ENCODE measurements at regions of chr14 and their contacts with region 1.

Region 1: DNA sequence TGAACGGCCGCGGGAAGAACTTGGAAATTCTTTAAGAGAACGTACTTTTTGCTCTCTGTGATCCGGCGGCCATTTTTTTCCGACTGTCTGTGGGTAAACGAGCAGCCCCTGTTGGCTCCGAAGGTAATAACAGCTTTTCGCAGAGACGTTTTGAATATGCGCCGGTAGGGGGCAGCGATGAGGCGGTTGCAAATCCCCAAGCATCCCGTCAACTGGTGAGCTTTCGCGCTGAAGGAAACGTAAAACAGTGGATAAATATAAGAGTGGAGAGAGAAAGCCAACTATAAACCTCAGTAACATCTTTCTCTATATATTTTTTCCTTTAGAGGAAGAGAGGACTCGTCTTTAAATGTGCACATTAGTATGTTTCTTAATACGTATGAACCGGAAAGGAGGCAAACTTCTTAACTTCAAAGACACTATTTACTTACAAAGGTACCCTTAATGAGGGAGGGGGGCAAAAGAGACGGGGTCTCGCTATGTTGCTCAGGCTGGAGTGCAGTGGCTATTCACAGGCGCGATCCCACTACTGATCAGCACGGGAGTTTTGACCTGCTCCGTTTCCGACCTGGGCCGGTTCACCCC is 9.6 kb upstream of the NEMF start:
- DNase-seq: peak; percentile 70 to 93 (median 82)
- ATAC-seq: peak; percentile 28 to 47 (median 33)
- H3K4me3 ChIP-seq: peak overlapping the region; percentile 73 to 93
- H3K4me3 Mint-ChIP-seq: no peak overlapping the region
- H3K27ac ChIP-seq: peak overlapping the region; percentile 97
- H3K27ac Mint-ChIP-seq: no peak overlapping the region
- H3K4me1 ChIP-seq: peaks cover 19 to 37% of the 10 kb centered on the region in 2 experiments
- H3K4me1 Mint-ChIP-seq: peaks cover 0 to 25% (median 14%) of the 10 kb centered on the region in 3 donors
- H3K27me3 ChIP-seq: no peaks in the 10 kb centered on the region
- H3K27me3 Mint-ChIP-seq: peaks cover 0 to 7% of the 10 kb centered on the region in 2 donors

Region 2: DNA sequence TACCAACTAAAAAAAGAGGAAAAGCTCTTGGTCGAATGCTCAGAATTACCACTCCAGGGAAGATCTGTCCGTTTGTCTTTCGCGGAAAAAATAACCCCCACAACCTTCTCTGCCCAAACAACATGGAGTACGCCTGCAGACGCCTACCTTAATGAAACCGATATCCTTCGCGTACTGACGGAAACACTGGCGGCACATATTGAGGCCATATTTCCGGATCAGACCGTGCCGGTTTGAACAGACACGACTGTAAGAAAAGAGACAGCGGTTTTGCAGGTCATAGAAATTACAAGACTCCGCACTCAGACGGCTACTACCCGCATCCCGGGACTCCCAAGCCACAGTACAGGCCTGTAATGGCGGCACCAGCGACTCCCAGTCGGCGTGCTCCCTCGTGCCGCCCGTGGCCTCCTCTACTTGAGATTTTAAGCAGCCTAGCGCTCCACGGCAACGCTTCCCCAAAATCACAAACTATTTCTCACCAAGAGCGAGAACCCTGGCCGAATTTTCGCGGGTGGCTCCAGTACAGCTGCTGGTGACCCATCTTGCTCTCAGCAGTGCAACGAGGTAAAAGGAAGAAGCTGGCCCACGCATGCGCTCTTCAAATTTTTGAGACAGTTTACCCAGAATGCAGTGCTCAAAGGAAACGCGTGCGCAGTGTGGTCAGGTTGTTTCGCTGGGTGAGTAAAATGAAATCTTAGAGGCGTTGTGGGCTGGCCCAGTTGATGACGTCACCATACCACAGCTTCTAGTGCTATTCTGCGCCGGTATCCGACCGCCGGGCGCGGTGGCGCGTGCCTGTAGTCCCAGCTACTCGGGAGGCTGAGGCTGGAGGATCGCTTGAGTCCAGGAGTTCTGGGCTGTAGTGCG is 276.1 kb before region 1 on chr14 and contains the start of gene RPS29:
- CTCF ChIA-PET with region 1: interaction called in 1 of 2 experiments, 13 read pairs
- POLR2A ChIA-PET with region 1: interaction called in 1 of 2 experiments, 6 read pairs
- DNase-seq: peak; percentile 94 to 100 (median 97)
- ATAC-seq: peak; percentile 85 to 89 (median 88)
- H3K4me3 ChIP-seq: peak within 1 kb of the TSS; percentile 77 to 99
- H3K4me3 Mint-ChIP-seq: peak within 1 kb of the TSS; percentile 89 to 98 (median 98)
- H3K27ac ChIP-seq: peak within 1 kb of the TSS; percentile 93
- H3K27ac Mint-ChIP-seq: peak within 1 kb of the TSS; percentile 97 to 99
- H3K4me1 ChIP-seq: peaks cover 6 to 31% of the 10 kb centered on the region in 2 experiments
- H3K4me1 Mint-ChIP-seq: peaks cover 50 to 54% (median 52%) of the 10 kb centered on the region in 3 donors
- H3K27me3 ChIP-seq: no peaks in the 10 kb centered on the region
- H3K27me3 Mint-ChIP-seq: peaks cover 2 to 3% of the 10 kb centered on the region in 2 donors
- total RNA-seq, gene RPS29: 3,720 to 4,554 (median 3,981) TPM

Region 3: GRCh38 chr14:49892636-49893308 is 30.6 kb after region 1 on chr14 and contains the start of gene ARF6:
- CTCF ChIA-PET with region 1: interaction called, 10 to 23 read pairs
- POLR2A ChIA-PET with region 1: interaction called in 1 of 2 experiments, 4 read pairs
- DNase-seq: peak; percentile 81 to 96 (median 90)
- ATAC-seq: peak; percentile 84 to 89 (median 88)
- H3K4me3 ChIP-seq: peak within 1 kb of the TSS; percentile 98 to 99
- H3K4me3 Mint-ChIP-seq: peak within 1 kb of the TSS; percentile 93 to 98 (median 97)
- H3K27ac ChIP-seq: peak within 1 kb of the TSS; percentile 98
- H3K27ac Mint-ChIP-seq: peak within 1 kb of the TSS; percentile 99
- H3K4me1 ChIP-seq: peaks cover 15 to 25% of the 10 kb centered on the region in 2 experiments
- H3K4me1 Mint-ChIP-seq: peaks cover 29 to 52% (median 32%) of the 10 kb centered on the region in 3 donors
- H3K27me3 ChIP-seq: no peaks in the 10 kb centered on the region
- H3K27me3 Mint-ChIP-seq: no peaks in the 10 kb centered on the region
- total RNA-seq, gene ARF6: 72.0 to 111 (median 93.6) TPM

Region 4: DNA sequence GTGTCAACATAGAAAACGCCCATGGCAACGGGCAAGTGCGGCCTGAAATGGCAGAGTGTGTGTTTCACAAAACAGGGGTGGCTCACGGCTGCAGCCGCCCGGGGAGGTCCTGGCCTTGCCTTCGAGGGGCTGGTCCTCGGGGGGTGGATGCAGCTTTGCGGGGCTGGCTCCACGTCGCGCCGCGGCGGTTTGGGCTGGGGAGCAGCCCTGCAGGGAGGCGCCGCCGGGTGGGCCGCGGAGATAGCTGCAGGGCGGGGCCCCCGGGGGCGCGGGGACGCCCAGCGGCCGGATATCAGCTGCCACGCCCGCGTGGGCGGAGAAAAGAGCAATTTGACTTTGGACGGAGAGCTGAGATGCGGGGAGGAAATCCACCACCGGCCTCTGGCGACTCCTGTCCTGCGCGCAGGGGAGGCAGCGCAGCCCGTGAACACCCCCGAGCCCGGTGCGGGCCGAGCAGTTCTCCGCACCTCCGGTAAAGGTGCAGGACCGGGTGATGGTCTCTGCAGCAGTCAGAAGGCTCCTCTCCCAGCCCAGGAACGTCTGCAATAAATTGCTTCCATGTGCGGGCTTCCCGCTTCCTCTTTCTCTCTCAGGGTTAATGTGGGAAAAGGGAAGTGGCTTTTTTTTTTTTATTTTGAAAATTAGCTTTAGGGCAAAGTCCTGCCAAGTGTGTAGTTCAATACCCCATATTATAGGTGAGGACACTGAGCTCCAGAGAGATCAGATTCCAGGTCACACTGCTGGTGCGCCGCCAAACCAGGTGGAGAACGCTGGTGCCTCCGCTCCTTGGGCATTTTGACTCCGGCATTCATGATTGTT is 141.2 kb after region 1 on chr14:
- CTCF ChIA-PET with region 1: interaction called, 6 to 28 read pairs
- POLR2A ChIA-PET with region 1: interaction called, 4 to 10 read pairs
- DNase-seq: peak; percentile 59 to 86 (median 72)
- ATAC-seq: peak; percentile 40 to 47 (median 44)
- H3K4me3 ChIP-seq: peak overlapping the region; percentile 60 to 83
- H3K4me3 Mint-ChIP-seq: peak overlapping the region; percentile 73 to 78 (median 75)
- H3K27ac ChIP-seq: peak overlapping the region; percentile 100
- H3K27ac Mint-ChIP-seq: peak overlapping the region; percentile 96 to 98
- H3K4me1 ChIP-seq: peaks cover 42 to 59% of the 10 kb centered on the region in 2 experiments
- H3K4me1 Mint-ChIP-seq: peaks cover 46 to 62% (median 52%) of the 10 kb centered on the region in 3 donors
- H3K27me3 ChIP-seq: no peaks in the 10 kb centered on the region
- H3K27me3 Mint-ChIP-seq: no peaks in the 10 kb centered on the region

Region 5: DNA sequence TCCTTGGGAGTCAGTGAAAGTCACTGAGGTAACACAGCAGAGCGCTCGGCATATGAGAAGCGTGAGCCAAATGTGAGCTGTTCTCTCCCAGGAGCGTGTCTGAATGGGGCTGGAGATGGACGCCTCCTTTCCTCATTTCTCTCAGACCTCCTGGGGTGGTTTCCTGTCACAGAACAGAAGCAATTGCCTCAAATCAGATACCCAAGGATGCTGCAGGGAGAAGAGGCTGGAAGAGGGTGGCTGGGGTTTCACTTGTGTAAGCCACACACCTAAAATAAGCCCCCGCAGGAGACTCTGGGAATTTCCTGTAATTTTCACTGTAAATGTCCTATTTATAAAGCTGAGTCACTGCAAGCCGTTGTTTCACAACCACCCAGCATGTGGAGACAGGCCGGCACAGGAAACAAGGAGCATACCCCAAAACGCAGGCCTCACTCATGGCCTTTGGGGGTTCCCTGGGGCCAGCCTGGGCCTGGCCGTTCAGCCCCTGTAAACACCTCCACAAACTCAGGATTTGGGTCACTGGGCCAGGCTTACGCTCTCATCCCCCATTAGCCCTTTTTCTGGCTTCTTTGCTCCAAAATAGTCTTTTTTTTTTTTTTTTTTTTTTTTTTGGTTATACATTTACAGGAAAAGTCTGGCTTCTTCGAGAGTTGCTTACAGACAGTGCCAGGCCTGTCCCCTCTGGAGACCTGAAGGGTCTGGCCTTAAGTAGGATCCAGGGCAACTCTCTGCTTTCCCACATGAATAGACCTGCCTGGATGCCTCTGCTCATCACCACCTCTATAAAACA is 198.9 kb after region 1 on chr14:
- CTCF ChIA-PET with region 1: interaction called, 5 to 29 read pairs
- POLR2A ChIA-PET with region 1: interaction called, 9 to 15 read pairs
- DNase-seq: peak in 9 of 35 experiments; percentile 11 to 66 (median 34)
- ATAC-seq: no peak
- H3K4me3 ChIP-seq: peak overlapping the region in 1 of 2 donors; percentile 41
- H3K4me3 Mint-ChIP-seq: peak overlapping the region; percentile 70 to 90 (median 88)
- H3K27ac ChIP-seq: peak overlapping the region; percentile 93
- H3K27ac Mint-ChIP-seq: peak overlapping the region; percentile 100
- H3K4me1 ChIP-seq: peaks cover 44 to 76% of the 10 kb centered on the region in 2 experiments
- H3K4me1 Mint-ChIP-seq: peaks cover 75 to 92% (median 82%) of the 10 kb centered on the region in 3 donors
- H3K27me3 ChIP-seq: no peaks in the 10 kb centered on the region
- H3K27me3 Mint-ChIP-seq: no peaks in the 10 kb centered on the region

Region 6: DNA sequence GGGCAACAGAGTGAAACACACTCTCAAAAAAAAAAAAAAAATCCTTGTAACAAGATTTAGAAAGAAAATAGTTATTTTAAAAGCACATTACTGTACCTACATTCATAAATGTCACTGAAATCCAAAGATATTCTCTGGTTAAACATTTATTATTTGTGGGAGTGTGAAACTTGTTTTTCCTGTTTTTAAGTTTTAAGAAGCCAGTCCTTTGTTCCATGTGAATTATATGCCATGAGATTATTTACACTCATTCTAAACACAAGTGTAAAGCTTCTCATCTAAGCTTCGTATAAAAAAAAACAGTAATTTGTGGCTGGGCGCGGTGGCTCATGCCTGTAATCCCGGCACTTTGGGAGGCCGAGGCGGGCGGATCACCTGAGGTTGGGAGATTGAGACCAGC is 239.2 kb after region 1 on chr14:
- CTCF ChIA-PET with region 1: interaction called, 9 to 13 read pairs
- POLR2A ChIA-PET with region 1: interaction called in 1 of 2 experiments, 15 read pairs
- DNase-seq: no peak
- ATAC-seq: no peak
- H3K4me3 ChIP-seq: no peak overlapping the region
- H3K4me3 Mint-ChIP-seq: no peak overlapping the region
- H3K27ac ChIP-seq: no peak overlapping the region
- H3K27ac Mint-ChIP-seq: peak overlapping the region in 1 of 2 donors; percentile 86
- H3K4me1 ChIP-seq: peaks cover 33 to 51% of the 10 kb centered on the region in 2 experiments
- H3K4me1 Mint-ChIP-seq: peaks cover 53 to 70% (median 68%) of the 10 kb centered on the region in 3 donors
- H3K27me3 ChIP-seq: no peaks in the 10 kb centered on the region
- H3K27me3 Mint-ChIP-seq: no peaks in the 10 kb centered on the region

Region 7: GRCh38 chr14:50116181-50116956 is 254.2 kb after region 1 on chr14 and contains the start of gene VCPKMT:
- CTCF ChIA-PET with region 1: interaction called, 5 to 32 read pairs
- POLR2A ChIA-PET with region 1: interaction called, 14 to 19 read pairs
- DNase-seq: peak; percentile 90 to 98 (median 95)
- ATAC-seq: peak; percentile 98 to 100 (median 99)
- H3K4me3 ChIP-seq: peak within 1 kb of the TSS; percentile 75 to 96
- H3K4me3 Mint-ChIP-seq: peak within 1 kb of the TSS; percentile 83 to 97 (median 94)
- H3K27ac ChIP-seq: peak within 1 kb of the TSS; percentile 97
- H3K27ac Mint-ChIP-seq: peak within 1 kb of the TSS; percentile 95 to 99
- H3K4me1 ChIP-seq: peaks cover 5 to 16% of the 10 kb centered on the region in 2 experiments
- H3K4me1 Mint-ChIP-seq: peaks cover 23 to 39% (median 34%) of the 10 kb centered on the region in 3 donors
- H3K27me3 ChIP-seq: no peaks in the 10 kb centered on the region
- H3K27me3 Mint-ChIP-seq: no peaks in the 10 kb centered on the region
- total RNA-seq, gene VCPKMT: 16.3 to 24.4 (median 18.3) TPM